Activated CD8-positive, alpha-beta memory T cell treated with anti-CD3 and anti-CD28 coated beads, Interleukin-2, amount 10 ng/mL, durations not matched to agents 7 days and 5 days (primary cell): ENCODE measurements at regions of chr19 and their contacts with region 1.

Region 1: DNA sequence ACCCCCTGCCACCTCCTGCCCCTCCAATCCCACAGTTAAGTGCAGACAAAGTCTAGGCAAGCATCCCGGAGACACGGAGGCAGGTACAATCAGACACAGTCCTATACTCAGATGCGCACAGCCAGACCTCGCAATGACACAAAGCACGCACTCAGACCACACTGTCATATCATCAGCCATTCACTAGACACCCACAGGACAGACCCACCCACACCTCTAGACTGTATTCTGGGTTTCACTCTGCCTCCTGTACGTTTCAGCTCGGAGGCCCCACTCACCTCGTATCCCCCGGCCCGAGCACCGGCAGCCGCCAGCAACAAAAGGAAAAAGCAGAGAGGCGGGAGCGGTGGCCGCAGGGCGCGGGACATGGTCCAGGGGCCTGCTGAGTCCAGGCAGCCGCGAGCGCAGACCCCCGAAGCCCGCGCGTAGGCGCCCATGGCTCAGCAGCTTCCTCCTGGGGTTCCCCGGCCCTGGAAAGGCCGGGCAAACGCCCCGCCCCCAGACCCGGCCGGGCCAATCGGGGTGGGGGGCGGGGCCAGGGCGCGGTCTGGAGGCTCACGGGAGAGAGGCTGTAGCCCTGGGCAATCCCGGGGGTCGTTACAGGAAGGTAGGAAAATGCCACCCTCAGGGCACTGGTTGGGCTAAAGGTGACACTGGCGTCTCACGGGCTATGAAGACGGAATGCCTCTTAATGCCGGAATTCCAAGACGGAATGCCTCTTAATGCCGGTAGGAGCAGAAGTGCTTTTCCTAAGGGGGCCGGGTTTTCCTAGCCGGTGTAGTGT is at the starts of genes MAN2B1 and WDR83:
- DNase-seq: peak; percentile 82
- ATAC-seq: peak; percentile 83
- H3K4me3 Mint-ChIP-seq: peak within 1 kb of the TSS; percentile 88
- H3K27ac Mint-ChIP-seq: peak within 1 kb of the TSS; percentile 78
- H3K4me1 Mint-ChIP-seq: peaks cover 53% of the 10 kb centered on the region
- H3K27me3 Mint-ChIP-seq: no peaks in the 10 kb centered on the region
- total RNA-seq, gene MAN2B1: 102 to 118 TPM
- total RNA-seq, gene WDR83: 21.4 to 22.0 TPM

Region 2: DNA sequence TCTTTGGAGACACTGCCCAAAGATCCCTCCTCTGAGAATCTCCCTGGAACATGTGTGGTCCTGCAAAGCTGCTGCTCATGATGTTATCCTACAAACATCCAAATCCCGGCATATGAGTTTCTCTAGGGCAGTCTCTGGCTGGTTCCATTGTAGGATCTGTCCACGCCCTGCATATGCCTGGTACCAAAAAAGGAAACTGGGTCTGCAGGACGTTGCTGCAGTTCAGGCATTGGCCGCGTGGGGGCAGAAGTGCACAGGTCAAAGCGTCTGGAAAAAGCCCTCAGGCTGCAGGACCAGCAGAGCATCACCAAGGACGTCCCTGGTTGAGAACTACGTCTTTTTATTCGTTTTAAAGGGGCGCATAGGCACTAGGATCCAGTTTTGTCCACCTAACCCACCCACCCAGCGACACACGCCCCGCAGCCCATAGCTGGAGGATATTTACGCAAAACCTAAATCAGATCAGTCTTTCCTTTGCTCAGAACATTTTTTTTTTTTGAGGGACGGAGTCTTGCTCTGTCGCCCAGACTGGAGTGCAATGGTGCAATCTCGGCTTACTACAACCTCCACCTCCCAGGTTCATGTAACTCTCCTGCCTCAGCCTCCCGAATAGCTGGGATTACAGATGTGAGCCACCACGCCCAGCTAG is 102.3 kb before region 1 on chr19:
- CTCF ChIA-PET with region 1: interaction called, 57 read pairs
- DNase-seq: peak; percentile 94
- ATAC-seq: peak; percentile 95
- H3K4me3 Mint-ChIP-seq: no peak overlapping the region
- H3K27ac Mint-ChIP-seq: no peak overlapping the region
- H3K4me1 Mint-ChIP-seq: peaks cover 5% of the 10 kb centered on the region
- H3K27me3 Mint-ChIP-seq: no peaks in the 10 kb centered on the region

Region 3: DNA sequence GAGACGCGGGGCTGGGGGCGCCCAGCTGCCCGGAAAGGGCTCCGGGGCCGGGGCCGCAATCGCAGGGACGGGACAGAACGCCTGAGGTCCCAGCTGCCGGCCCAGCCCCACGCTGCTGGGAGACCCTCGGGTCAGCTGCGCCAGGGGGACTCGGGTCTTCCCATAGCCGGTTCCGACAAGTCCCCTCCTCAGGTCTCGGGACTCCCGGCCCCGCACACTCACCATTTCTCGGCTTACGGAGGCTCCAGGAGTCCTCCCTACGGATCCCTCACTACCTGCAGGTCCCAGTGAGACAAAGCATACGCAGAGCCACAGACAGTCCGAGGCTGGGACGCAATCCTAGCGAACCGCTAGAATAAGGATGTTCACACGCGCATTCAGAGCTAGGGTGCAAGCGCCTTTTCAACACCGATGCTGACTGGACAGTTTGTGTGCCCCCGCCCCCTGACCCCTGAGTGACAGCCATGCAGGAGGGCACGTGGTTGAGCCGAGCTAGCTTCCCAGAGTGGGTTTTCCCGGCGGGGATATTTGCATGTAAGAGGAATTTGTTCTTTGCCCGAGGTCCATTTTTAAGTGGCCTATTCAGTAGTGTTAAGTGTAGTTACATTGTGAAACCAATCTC is 69.4 kb before region 1 on chr19:
- CTCF ChIA-PET with region 1: no interaction called
- DNase-seq: no peak
- ATAC-seq: no peak
- H3K4me3 Mint-ChIP-seq: no peak overlapping the region
- H3K27ac Mint-ChIP-seq: no peak overlapping the region
- H3K4me1 Mint-ChIP-seq: no peaks in the 10 kb centered on the region
- H3K27me3 Mint-ChIP-seq: no peaks in the 10 kb centered on the region

Region 4: DNA sequence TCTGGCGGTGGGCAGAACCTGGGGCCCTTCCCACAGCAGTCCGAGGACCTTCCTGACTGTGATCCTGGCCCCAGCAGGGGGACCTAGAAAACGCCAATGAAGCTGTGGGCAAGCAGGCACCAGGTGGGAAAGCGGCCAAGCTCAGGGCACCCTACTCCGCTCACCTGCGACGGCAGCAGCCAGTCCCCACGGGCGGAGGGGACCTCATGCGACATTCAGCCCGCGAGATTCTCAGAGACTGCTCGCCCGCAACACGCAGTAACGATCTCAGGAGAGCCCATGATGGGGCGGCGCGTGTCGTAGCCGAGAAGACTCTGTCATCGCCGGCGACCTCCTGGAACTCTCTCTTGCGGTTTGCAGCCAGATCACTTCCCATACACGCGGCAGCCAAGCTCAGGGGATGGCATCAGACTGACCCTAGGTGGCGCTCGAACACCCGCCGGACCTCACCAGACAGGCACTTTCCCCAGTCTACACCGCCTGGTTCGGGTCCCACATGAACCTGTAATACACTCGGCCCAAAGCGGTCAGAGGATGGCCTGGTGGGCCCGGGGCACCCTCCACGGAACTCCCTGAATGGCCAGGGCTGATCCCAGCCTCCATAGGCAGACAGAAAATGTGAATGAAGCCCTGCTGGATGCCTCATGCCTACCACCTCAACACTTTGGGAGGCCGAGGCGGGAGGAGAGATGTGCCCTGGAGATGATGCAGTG is 26.4 kb before region 1 on chr19:
- CTCF ChIA-PET with region 1: interaction called, 13 read pairs
- DNase-seq: peak; percentile 93
- ATAC-seq: peak; percentile 96
- H3K4me3 Mint-ChIP-seq: peak overlapping the region; percentile 53
- H3K27ac Mint-ChIP-seq: peak overlapping the region; percentile 58
- H3K4me1 Mint-ChIP-seq: peaks cover 9% of the 10 kb centered on the region
- H3K27me3 Mint-ChIP-seq: no peaks in the 10 kb centered on the region

Region 5: DNA sequence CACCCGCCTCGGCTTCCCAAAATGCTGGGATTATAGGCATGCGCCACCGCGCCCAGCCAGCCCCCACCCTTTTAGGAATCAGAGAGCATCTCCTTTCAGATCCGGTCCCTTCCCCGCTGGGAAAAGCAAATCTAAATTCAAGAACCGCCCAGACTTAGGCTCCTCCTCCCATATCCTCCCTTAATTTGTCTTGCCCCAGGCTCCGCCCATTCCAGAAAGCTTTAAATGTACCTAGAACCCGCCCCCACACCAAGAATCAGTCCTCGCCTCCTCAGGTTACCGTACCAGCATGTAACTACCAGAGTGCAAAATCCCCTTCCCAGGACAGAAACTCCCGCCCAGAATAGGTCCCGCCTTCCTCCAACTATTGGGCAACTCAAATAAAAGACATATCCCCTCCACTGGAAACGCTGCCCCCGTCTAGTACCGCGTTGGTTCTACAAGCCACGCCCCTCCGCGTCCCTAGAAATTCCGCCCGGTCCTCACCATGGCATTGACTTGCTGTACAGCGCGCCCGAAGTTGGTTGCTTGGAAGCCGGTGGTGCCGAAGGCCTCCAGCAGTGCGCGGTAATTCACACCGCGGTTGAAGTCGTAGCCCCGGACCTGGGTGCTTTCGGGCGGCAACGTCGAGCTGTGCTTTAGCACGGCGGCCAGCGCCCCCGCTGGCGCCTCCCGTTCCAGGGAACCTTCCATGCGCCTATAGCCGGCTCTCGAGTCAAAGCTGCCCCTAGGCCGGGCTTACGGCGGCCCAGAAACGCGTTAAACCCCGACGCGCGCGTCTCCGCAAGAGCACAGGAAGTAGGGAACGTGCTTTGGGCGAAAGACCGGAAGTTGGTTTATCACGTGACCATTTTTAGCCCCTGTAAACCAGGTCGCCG is 14.9 kb after region 1 on chr19 and contains the start of gene DHPS:
- CTCF ChIA-PET with region 1: interaction called, 28 read pairs
- DNase-seq: peak; percentile 96
- ATAC-seq: peak; percentile 78
- H3K4me3 Mint-ChIP-seq: peak within 1 kb of the TSS; percentile 93
- H3K27ac Mint-ChIP-seq: peak within 1 kb of the TSS; percentile 94
- H3K4me1 Mint-ChIP-seq: peaks cover 26% of the 10 kb centered on the region
- H3K27me3 Mint-ChIP-seq: no peaks in the 10 kb centered on the region
- total RNA-seq, gene DHPS: 106 to 111 TPM

Region 6: GRCh38 chr19:12806239-12807081 is 140.0 kb after region 1 on chr19 and contains the start of gene RNASEH2A:
- CTCF ChIA-PET with region 1: no interaction called
- DNase-seq: peak; percentile 93
- ATAC-seq: peak; percentile 89
- H3K4me3 Mint-ChIP-seq: peak within 1 kb of the TSS; percentile 89
- H3K27ac Mint-ChIP-seq: peak within 1 kb of the TSS; percentile 82
- H3K4me1 Mint-ChIP-seq: peaks cover 26% of the 10 kb centered on the region
- H3K27me3 Mint-ChIP-seq: no peaks in the 10 kb centered on the region
- total RNA-seq, gene RNASEH2A: 53.4 to 58.8 TPM